K562 (cell line): ENCODE measurements at regions of chr2 and their contacts with region 1.

Region 1: GRCh38 chr2:164992818-164993217 is 37.5 kb upstream of the SLC38A11 start:
- DNase-seq: peak in 2 of 4 experiments; percentile 16 to 82
- ATAC-seq: peak; percentile 87
- H3K4me3 ChIP-seq: no peak overlapping the region
- H3K27ac ChIP-seq: no peak overlapping the region
- H3K4me1 ChIP-seq: no peaks in the 10 kb centered on the region
- H3K27me3 ChIP-seq: no peaks in the 10 kb centered on the region
- CTCF ChIP-seq: peak; percentile 20 to 63 (median 45); a peak in 4 of 6 replicates
- EP300 ChIP-seq: no peak
- POLR2A ChIP-seq: no peak
- RAD21 ChIP-seq: peak; percentile 27 to 38; a peak in 3 of 4 replicates

Region 2: GRCh38 chr2:163934131-163934530 is 1058.7 kb before region 1 on chr2:
- CTCF ChIA-PET with region 1: no interaction called
- POLR2A ChIA-PET with region 1: no interaction called
- in situ Hi-C with region 1: no loop called
- intact Hi-C with region 1: no loop called
- DNase-seq: no peak
- ATAC-seq: no peak
- H3K4me3 ChIP-seq: no peak overlapping the region
- H3K27ac ChIP-seq: no peak overlapping the region
- H3K4me1 ChIP-seq: no peaks in the 10 kb centered on the region
- H3K27me3 ChIP-seq: no peaks in the 10 kb centered on the region
- CTCF ChIP-seq: no peak
- EP300 ChIP-seq: no peak
- POLR2A ChIP-seq: no peak
- RAD21 ChIP-seq: no peak

Region 3: DNA sequence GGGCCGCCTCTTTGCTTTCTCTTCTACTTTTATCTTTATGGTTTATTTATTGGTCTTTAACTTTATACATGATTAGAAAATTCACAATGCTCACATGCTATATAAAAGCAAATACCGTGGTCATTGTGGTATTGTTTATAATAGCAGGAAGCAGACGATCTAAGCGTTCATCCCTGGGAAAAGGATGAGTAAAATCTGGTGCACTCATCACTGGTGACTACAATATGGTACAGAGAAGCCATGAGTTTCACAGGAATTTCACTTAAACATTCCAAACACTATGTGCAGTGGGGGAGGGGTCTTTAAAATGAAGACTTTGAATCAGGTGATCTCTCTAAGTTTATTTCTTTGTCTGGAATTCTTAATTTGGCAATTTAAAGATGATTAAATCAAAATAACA is 113.1 kb after region 1 on chr2:
- CTCF ChIA-PET with region 1: no interaction called
- POLR2A ChIA-PET with region 1: no interaction called
- in situ Hi-C with region 1: no loop called
- intact Hi-C with region 1: no loop called
- DNase-seq: no peak
- ATAC-seq: no peak
- H3K4me3 ChIP-seq: no peak overlapping the region
- H3K27ac ChIP-seq: no peak overlapping the region
- H3K4me1 ChIP-seq: no peaks in the 10 kb centered on the region
- H3K27me3 ChIP-seq: no peaks in the 10 kb centered on the region
- CTCF ChIP-seq: no peak
- EP300 ChIP-seq: no peak
- POLR2A ChIP-seq: no peak
- RAD21 ChIP-seq: no peak

Region 4: DNA sequence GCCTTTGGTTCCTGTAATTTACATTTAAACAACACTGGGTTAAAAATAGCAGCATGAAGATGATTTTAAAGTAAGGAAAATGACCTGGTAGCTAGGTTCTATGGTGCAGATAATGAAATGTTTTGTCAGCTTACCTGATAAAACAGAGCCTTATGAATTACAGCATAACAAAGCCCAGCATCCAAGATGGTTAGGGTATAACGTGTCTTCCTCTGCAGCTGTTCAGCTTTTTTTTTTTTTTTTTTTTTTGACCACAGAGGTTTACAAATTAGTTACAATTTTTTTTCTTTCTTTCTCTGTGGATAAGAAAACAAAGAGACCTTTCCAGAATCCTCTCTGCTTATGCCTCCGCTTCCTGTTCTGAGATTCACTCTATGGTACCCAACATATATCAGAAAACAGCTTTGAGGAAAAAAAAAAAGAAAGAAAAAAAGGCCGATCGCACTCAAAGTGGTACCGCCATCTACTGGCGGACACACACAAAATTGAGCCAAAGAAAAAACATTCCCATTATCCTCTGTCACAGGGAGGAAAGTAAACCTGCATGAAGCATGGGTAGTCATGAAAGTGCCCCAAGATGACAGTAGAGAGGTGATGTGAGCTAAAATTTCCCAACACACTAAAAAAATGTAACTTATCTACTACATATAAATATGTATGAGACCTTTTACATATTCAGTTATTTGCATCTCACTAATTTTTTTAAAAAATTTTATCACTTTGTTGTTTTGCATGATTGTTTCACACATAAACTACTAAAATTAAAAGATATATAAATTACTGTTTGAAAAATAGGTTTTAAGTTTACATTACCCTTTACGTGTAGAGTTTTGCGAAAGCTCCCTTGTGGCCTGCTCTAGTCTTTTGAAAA is 211.1 kb after region 1 on chr2 and contains the start of gene SCN3A:
- CTCF ChIA-PET with region 1: no interaction called
- POLR2A ChIA-PET with region 1: no interaction called
- in situ Hi-C with region 1: no loop called
- intact Hi-C with region 1: loop called (anchors 2 kb)
- DNase-seq: peak; percentile 8 to 33 (median 14)
- ATAC-seq: no peak
- H3K4me3 ChIP-seq: no peak within 1 kb of the TSS
- H3K27ac ChIP-seq: no peak within 1 kb of the TSS
- H3K4me1 ChIP-seq: no peaks in the 10 kb centered on the region
- H3K27me3 ChIP-seq: no peaks in the 10 kb centered on the region
- CTCF ChIP-seq: peak; percentile 29 to 54 (median 45); a peak in 5 of 6 replicates
- EP300 ChIP-seq: no peak
- POLR2A ChIP-seq: no peak
- RAD21 ChIP-seq: peak; percentile 38 to 43; a peak in 2 of 4 replicates
- polyA plus RNA-seq, gene SCN3A: not detected

Region 5: GRCh38 chr2:165293440-165294353 is 300.9 kb after region 1 on chr2:
- CTCF ChIA-PET with region 1: no interaction called
- POLR2A ChIA-PET with region 1: no interaction called
- in situ Hi-C with region 1: no loop called
- intact Hi-C with region 1: loop called (anchors 2 kb)
- DNase-seq: peak; percentile 21 to 55 (median 34)
- ATAC-seq: peak; percentile 88
- H3K4me3 ChIP-seq: no peak overlapping the region
- H3K27ac ChIP-seq: no peak overlapping the region
- H3K4me1 ChIP-seq: no peaks in the 10 kb centered on the region
- H3K27me3 ChIP-seq: no peaks in the 10 kb centered on the region
- CTCF ChIP-seq: peak; percentile 26 to 58 (median 47); a peak in 4 of 6 replicates
- EP300 ChIP-seq: no peak
- POLR2A ChIP-seq: no peak
- RAD21 ChIP-seq: peak; percentile 15 to 39; a peak in 2 of 4 replicates

Region 6: DNA sequence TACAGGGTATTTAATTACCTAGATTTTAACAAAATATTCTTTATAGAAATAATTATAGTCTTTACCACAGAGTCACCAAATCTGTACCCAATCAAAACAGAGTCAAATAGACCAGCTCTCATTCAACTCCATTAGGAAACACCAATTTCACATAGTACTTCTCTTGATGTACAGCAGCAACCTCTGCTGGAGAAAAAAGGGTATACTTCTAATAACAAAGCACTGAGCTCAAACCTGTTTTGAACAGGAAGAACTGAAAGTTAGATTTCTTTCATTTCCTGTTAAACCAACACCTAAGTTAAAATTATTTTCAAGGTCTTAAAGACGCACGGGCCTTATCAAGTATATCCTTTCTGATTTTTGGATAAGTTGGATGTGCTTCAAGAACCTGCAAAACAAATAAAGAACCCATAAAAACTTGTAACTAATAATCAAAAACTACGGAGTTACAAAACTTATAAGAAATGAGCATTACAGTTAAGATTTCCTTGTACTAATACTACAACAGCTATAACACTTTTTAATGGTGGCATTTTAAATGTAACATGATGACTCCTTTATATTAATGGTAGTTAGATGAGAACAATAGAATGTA is 881.7 kb after region 1 on chr2:
- CTCF ChIA-PET with region 1: no interaction called
- POLR2A ChIA-PET with region 1: no interaction called
- in situ Hi-C with region 1: no loop called
- intact Hi-C with region 1: loop called (anchors 2 kb)
- DNase-seq: peak; percentile 22 to 43 (median 34)
- ATAC-seq: peak; percentile 89
- H3K4me3 ChIP-seq: no peak overlapping the region
- H3K27ac ChIP-seq: no peak overlapping the region
- H3K4me1 ChIP-seq: no peaks in the 10 kb centered on the region
- H3K27me3 ChIP-seq: no peaks in the 10 kb centered on the region
- CTCF ChIP-seq: peak; percentile 29 to 60 (median 52); a peak in 5 of 6 replicates
- EP300 ChIP-seq: no peak
- POLR2A ChIP-seq: no peak
- RAD21 ChIP-seq: peak; percentile 55 to 60

Region 7: DNA sequence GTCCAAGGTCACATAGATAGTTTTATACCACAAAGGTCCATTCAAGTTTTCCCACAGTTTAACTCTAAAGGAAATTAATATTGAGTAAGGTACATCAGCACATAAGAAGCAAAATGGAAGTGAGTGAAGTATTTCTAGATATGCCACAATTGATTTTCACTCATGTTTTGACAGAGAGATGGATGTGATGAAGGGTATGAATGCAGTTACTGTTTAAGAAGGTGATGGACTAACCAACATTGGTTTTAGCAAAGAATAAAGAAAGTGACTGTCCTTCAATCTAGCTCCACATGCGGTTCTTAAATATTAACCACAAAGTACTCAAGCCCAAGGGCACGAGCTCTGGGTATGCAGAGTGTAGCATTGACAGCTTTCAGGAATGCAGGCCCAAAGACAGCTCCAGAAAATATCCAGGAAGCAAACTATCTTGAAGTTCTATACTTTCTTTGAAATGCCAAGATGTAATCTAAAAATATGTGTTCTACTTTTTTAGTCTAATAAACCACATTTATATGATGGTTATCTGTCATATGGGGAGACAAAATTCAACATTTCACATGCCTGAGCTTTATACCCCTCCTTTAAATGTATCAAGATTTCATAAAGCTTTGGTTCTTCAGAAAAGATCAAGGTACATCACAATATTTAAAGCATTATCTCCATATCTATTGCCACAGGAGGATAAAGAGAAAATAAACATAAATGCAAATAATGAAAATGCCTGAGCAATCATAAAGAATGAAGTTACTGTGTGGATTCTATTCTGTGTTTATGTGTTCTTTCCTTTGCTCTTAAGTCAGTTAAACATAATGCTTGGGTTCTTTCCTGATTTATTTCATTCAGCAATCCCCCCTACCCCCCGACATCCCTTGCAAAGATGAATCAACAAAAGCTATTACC is 1141.7 kb after region 1 on chr2:
- CTCF ChIA-PET with region 1: no interaction called
- POLR2A ChIA-PET with region 1: no interaction called
- in situ Hi-C with region 1: no loop called
- intact Hi-C with region 1: loop called (anchors 5 kb)
- DNase-seq: no peak
- ATAC-seq: no peak
- H3K4me3 ChIP-seq: no peak overlapping the region
- H3K27ac ChIP-seq: no peak overlapping the region
- H3K4me1 ChIP-seq: no peaks in the 10 kb centered on the region
- H3K27me3 ChIP-seq: no peaks in the 10 kb centered on the region
- CTCF ChIP-seq: no peak
- EP300 ChIP-seq: no peak
- POLR2A ChIP-seq: no peak
- RAD21 ChIP-seq: no peak

Region 8: GRCh38 chr2:166180951-166181812 is 1188.4 kb after region 1 on chr2:
- CTCF ChIA-PET with region 1: no interaction called
- POLR2A ChIA-PET with region 1: no interaction called
- in situ Hi-C with region 1: no loop called
- intact Hi-C with region 1: loop called (anchors 10 kb)
- DNase-seq: peak; percentile 39 to 66 (median 45)
- ATAC-seq: peak; percentile 89
- H3K4me3 ChIP-seq: no peak overlapping the region
- H3K27ac ChIP-seq: no peak overlapping the region
- H3K4me1 ChIP-seq: no peaks in the 10 kb centered on the region
- H3K27me3 ChIP-seq: peaks cover 0 to 7% of the 10 kb centered on the region in 2 experiments; a peak in 1 of 5 replicates
- CTCF ChIP-seq: peak; percentile 61 to 69 (median 65)
- EP300 ChIP-seq: no peak
- POLR2A ChIP-seq: no peak
- RAD21 ChIP-seq: peak; percentile 36 to 58

Region 9: DNA sequence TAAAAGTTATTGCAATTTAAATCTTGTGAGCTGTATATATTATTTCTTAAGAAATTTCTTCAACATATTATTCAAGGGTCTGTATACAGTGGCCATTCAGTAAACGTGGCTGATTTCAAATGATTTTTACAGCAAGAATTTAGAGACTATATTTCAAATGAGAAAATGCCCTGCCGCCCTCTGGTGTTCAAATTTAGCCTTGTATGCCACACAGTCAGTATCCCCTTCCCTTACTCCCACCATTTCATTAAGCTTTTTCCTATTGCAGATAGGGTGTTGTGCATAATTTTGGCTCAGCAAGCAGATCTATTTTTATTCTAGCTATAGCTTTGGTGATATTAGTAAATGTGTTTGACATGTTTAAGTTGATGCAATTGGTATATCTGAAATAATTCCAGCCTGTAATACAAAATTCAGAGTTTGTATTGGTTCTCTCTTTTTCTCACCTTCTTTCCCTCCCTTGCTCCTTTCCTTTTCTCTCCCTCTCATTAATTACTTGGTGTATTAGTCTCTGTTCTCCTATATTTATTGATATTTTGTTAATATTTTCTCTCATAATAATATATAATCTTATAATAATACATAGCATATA is 1524.0 kb after region 1 on chr2:
- CTCF ChIA-PET with region 1: no interaction called
- POLR2A ChIA-PET with region 1: no interaction called
- in situ Hi-C with region 1: no loop called
- intact Hi-C with region 1: loop called (anchors 2 kb)
- DNase-seq: peak; percentile 13 to 50 (median 24)
- ATAC-seq: peak; percentile 87
- H3K4me3 ChIP-seq: no peak overlapping the region
- H3K27ac ChIP-seq: no peak overlapping the region
- H3K4me1 ChIP-seq: no peaks in the 10 kb centered on the region
- H3K27me3 ChIP-seq: no peaks in the 10 kb centered on the region
- CTCF ChIP-seq: peak; percentile 37 to 68 (median 48); a peak in 4 of 6 replicates
- EP300 ChIP-seq: no peak
- POLR2A ChIP-seq: no peak
- RAD21 ChIP-seq: peak; percentile 64 to 66